ENCODE measurements at regions of chr5 and their contacts with region 1.

Region 1: DNA sequence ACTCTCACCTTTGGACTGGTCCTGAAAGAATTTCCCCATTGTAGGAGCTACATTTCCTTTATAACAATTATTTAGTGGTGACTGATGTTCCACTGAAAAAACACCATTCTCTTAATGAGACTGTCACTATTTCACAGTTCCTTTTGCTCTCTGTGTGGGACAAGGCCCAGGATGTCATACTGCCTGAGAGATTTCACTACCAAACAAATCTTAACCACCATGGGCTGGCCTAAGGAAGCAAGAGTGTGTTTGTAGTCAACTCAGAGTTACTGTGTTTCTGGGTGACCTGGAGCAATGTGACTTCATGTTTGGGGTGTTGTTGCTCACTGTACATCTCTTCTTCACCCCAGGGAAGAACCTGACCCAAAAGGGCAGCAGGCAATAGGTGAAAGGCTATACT is 50.1 kb upstream of the ZNF608 start:
- DNase-seq: no peak

Region 2: DNA sequence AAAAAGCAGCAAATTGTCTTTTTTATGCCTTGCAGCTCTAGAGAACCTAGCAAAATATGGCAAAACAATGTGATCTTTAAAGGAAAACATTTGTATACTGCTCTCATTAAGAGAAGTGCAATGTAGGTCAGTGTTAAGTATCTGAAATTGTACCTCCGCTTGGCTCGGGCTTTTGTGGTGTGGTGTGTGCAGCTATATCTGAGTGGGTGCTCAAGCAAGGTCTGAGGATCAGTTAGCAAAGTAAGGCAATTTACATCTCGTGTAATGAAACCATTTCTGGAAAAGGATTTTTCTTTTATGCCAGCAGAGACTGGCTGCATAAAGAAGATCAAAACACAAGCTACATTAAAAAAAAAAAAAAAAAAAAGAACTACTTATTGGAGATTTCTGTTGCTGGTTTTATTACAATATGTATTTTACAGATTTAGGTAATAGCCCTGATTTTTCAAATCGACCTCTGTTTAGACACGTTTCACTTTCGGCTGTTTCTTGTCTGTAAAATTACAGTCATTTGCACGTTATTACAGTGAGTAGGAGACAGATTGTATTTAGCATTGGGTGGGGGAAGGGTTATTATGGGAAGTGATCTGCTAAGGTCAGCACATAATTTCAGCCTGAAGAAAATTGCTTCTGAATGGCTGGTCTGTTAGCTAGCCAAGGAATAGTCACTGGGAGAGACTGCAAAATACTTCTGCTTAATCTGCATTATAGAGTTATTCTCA is 42.1 kb before region 1 on chr5:
- intact Hi-C with region 1: loop called (anchors 5 kb)
- DNase-seq: no peak

Region 3: GRCh38 chr5:124996764-124997077 is 200.2 kb after region 1 on chr5:
- intact Hi-C with region 1: no loop called
- DNase-seq: no peak

Measured in cardiac septum (tissue), 1 donor.